CD4-positive, alpha-beta memory T cell (primary cell): ENCODE measurements at regions of chr6 and their contacts with region 1.

Region 1: DNA sequence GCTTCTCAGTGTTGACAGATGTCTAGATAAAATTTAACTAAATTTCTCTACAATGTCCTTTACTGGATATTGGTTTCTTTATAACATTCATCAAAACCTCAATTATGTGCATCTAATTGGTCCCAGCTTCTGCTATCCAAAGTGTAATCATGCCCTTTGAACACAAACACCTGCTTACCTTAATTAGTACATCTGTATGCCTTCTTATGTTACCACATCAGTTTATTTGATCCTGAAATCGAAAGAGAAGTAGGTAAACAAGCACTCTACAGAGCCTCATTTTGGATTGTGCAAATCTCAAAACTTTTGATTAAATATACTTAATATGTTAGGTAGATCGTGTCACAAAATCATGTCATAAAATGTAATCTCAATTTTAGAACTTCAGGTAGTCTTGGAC is 36.5 kb downstream of the TAB2 start:
- DNase-seq: no peak
- H3K4me3 ChIP-seq: no peak overlapping the region
- H3K4me3 Mint-ChIP-seq: peak overlapping the region in 3 of 8 donors; percentile 12 to 50 (median 33)
- H3K27ac ChIP-seq: no peak overlapping the region
- H3K27ac Mint-ChIP-seq: peak overlapping the region in 4 of 7 donors; percentile 31 to 79 (median 54)
- H3K4me1 ChIP-seq: peaks cover 90% of the 10 kb centered on the region
- H3K4me1 Mint-ChIP-seq: peaks cover 55 to 92% (median 75%) of the 10 kb centered on the region in 4 donors
- H3K27me3 ChIP-seq: no peaks in the 10 kb centered on the region
- H3K27me3 Mint-ChIP-seq: no peaks in the 10 kb centered on the region

Region 2: GRCh38 chr6:149335924-149336608 is 17.9 kb before region 1 on chr6:
- CTCF ChIA-PET with region 1: no interaction called
- POLR2A ChIA-PET with region 1: no interaction called
- intact Hi-C with region 1: loop called (anchors 1 kb)
- DNase-seq: no peak
- H3K4me3 ChIP-seq: no peak overlapping the region
- H3K4me3 Mint-ChIP-seq: peak overlapping the region; percentile 7 to 72 (median 63)
- H3K27ac ChIP-seq: peak overlapping the region; percentile 15
- H3K27ac Mint-ChIP-seq: peak overlapping the region; percentile 26 to 64 (median 60)
- H3K4me1 ChIP-seq: peaks cover 93% of the 10 kb centered on the region
- H3K4me1 Mint-ChIP-seq: peaks cover 69 to 90% (median 77%) of the 10 kb centered on the region in 4 donors
- H3K27me3 ChIP-seq: no peaks in the 10 kb centered on the region
- H3K27me3 Mint-ChIP-seq: no peaks in the 10 kb centered on the region

Region 3: DNA sequence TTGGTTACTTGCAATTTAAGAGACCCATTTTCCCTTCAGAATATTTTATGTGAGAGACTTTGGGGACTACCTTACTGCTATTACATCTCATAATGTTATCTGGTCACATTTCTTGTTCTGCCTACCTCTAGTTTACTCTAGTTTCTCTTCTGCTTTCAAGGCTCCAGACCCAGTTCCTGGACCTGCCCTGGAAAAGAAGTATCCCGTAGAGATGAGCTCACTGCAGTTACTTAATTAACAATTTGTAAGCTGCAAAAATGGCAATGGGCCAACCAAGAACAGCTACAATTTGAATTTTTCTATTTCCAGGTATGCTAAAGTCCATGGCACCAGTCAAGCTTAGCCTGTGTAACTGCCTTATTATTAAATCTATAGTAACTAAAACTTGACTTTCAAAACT is 11.5 kb before region 1 on chr6:
- CTCF ChIA-PET with region 1: no interaction called
- POLR2A ChIA-PET with region 1: interaction called, 5 read pairs
- intact Hi-C with region 1: loop called (anchors 1 kb)
- DNase-seq: no peak
- H3K4me3 ChIP-seq: no peak overlapping the region
- H3K4me3 Mint-ChIP-seq: peak overlapping the region in 5 of 8 donors; percentile 6 to 62 (median 55)
- H3K27ac ChIP-seq: no peak overlapping the region
- H3K27ac Mint-ChIP-seq: peak overlapping the region in 5 of 7 donors; percentile 13 to 78 (median 64)
- H3K4me1 ChIP-seq: peaks cover 86% of the 10 kb centered on the region
- H3K4me1 Mint-ChIP-seq: peaks cover 58 to 87% (median 73%) of the 10 kb centered on the region in 4 donors
- H3K27me3 ChIP-seq: no peaks in the 10 kb centered on the region
- H3K27me3 Mint-ChIP-seq: no peaks in the 10 kb centered on the region

Region 4: GRCh38 chr6:149380523-149380922 is 26.5 kb after region 1 on chr6:
- CTCF ChIA-PET with region 1: no interaction called
- POLR2A ChIA-PET with region 1: no interaction called
- intact Hi-C with region 1: no loop called
- DNase-seq: no peak
- H3K4me3 ChIP-seq: no peak overlapping the region
- H3K4me3 Mint-ChIP-seq: no peak overlapping the region
- H3K27ac ChIP-seq: no peak overlapping the region
- H3K27ac Mint-ChIP-seq: peak overlapping the region in 1 of 7 donors; percentile 6
- H3K4me1 ChIP-seq: peaks cover 25% of the 10 kb centered on the region
- H3K4me1 Mint-ChIP-seq: peaks cover 26 to 67% (median 44%) of the 10 kb centered on the region in 4 donors
- H3K27me3 ChIP-seq: no peaks in the 10 kb centered on the region
- H3K27me3 Mint-ChIP-seq: no peaks in the 10 kb centered on the region

Region 5: GRCh38 chr6:149419696-149420404 is 65.8 kb after region 1 on chr6:
- CTCF ChIA-PET with region 1: no interaction called
- POLR2A ChIA-PET with region 1: no interaction called
- intact Hi-C with region 1: no loop called
- DNase-seq: no peak
- H3K4me3 ChIP-seq: no peak overlapping the region
- H3K4me3 Mint-ChIP-seq: no peak overlapping the region
- H3K27ac ChIP-seq: no peak overlapping the region
- H3K27ac Mint-ChIP-seq: peak overlapping the region in 1 of 7 donors; percentile 25
- H3K4me1 ChIP-seq: no peaks in the 10 kb centered on the region
- H3K4me1 Mint-ChIP-seq: peaks cover 0 to 16% (median 14%) of the 10 kb centered on the region in 4 donors
- H3K27me3 ChIP-seq: no peaks in the 10 kb centered on the region
- H3K27me3 Mint-ChIP-seq: no peaks in the 10 kb centered on the region